ENCODE measurements at regions of chr11 and their contacts with region 1.

Region 1: GRCh38 chr11:26753723-26754504 is 32.1 kb upstream of the SLC5A12 start:
- DNase-seq: peak; percentile 49
- H3K4me3 ChIP-seq: no peak overlapping the region
- H3K27ac ChIP-seq: no peak overlapping the region
- H3K4me1 ChIP-seq: no peaks in the 10 kb centered on the region
- H3K27me3 ChIP-seq: no peaks in the 10 kb centered on the region
- CTCF ChIP-seq: peak; percentile 46 to 81 (median 74)
- POLR2A ChIP-seq: no peak

Region 2: DNA sequence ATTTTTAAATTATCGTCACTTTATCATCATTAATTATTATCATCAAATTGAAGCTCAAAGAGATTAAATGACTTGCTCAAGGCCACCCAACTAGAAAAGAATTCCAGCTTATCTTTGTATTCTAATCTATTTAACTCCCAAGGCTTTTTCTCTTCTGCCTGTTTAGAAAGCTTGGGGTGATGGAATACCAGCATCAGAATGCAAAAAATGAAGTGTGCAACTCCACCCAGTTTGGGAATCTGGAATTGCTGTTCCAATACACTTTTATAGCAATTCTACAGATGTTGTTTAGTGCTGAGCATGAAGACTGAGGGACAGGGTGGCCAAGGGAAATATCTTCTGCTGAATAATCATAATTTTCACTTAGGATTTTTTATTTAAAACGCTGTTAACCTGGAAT is 142.8 kb after region 1 on chr11:
- intact Hi-C with region 1: loop called (anchors 10 kb)
- DNase-seq: no peak
- H3K4me3 ChIP-seq: no peak overlapping the region
- H3K27ac ChIP-seq: no peak overlapping the region
- H3K4me1 ChIP-seq: no peaks in the 10 kb centered on the region
- H3K27me3 ChIP-seq: no peaks in the 10 kb centered on the region
- CTCF ChIP-seq: no peak
- POLR2A ChIP-seq: no peak

Region 3: GRCh38 chr11:26993965-26994457 is 240.1 kb after region 1 on chr11 and contains the start of gene FIBIN:
- intact Hi-C with region 1: loop called (anchors 10 kb)
- DNase-seq: no peak
- H3K4me3 ChIP-seq: peak within 1 kb of the TSS; percentile 31 to 33
- H3K27ac ChIP-seq: peak within 1 kb of the TSS; percentile 36 to 54
- H3K4me1 ChIP-seq: no peaks in the 10 kb centered on the region
- H3K27me3 ChIP-seq: no peaks in the 10 kb centered on the region
- CTCF ChIP-seq: no peak
- POLR2A ChIP-seq: no peak
- total RNA-seq, gene FIBIN: 5.7 to 13.4 TPM

Region 4: DNA sequence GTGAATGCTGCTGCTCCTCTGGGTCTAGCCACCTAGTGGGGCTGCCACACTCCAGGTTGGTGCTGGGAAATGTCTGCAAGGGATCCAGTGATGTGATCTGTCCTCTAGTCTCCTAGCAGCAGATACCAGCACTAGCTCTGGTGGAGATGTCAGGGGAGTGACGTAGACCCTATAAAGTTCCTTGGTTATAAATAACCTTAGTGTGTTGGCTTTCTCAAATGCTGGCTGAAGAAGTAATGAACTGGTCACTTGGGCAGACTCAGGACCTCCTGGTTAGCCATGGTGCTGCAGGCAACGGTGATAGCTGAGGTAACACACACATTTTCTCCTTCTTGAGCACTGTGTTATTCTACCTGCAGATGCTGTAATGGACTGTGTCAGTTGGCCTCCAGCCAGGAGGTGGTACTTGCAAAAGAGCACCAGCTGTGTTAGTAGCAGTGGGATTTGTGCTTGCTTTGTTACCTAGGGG is 322.2 kb after region 1 on chr11:
- intact Hi-C with region 1: loop called (anchors 10 kb)
- DNase-seq: no peak
- H3K4me3 ChIP-seq: no peak overlapping the region
- H3K27ac ChIP-seq: no peak overlapping the region
- H3K4me1 ChIP-seq: no peaks in the 10 kb centered on the region
- H3K27me3 ChIP-seq: no peaks in the 10 kb centered on the region
- CTCF ChIP-seq: no peak
- POLR2A ChIP-seq: no peak

Region 5: DNA sequence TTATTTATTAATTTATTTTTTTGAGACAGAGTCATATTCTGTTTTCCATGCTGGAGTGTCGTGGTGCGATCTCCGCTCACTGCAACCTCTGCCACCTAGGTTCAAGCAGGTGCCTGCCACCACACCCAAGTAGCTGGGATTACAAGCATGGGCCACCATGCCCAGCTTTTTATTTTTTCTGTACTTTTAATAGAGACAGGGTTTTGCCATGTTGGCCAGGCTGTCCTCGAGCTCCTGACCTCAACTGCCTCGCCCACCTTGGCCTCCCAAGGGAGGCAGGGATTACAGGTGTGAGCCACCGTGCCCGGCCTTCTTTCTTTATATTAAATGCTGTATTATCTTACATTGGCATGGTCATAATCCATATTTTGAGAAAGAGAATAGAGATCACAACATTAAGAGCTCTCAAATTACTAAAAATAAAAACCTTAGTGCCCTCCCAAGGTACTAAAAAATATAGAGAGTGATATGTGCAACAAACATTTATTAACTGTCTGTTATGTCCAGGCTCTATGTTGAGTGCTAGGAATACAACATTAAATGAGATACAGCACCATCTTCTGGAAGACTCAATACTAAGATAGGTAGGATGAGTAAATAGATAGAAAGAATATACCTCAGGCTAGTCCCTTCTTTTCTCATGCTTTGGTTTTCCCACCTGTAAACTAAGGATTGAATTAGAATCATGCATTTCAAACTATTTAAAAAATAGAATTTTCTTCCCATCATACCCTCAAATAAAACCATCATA is 370.8 kb after region 1 on chr11:
- intact Hi-C with region 1: loop called (anchors 10 kb)
- DNase-seq: no peak
- H3K4me3 ChIP-seq: no peak overlapping the region
- H3K27ac ChIP-seq: no peak overlapping the region
- H3K4me1 ChIP-seq: no peaks in the 10 kb centered on the region
- H3K27me3 ChIP-seq: no peaks in the 10 kb centered on the region
- CTCF ChIP-seq: peak in 3 of 4 experiments; percentile 26 to 52 (median 39)
- POLR2A ChIP-seq: no peak

Region 6: GRCh38 chr11:27158722-27159679 is 405.1 kb after region 1 on chr11:
- intact Hi-C with region 1: loop called (anchors 2 kb)
- DNase-seq: peak; percentile 61
- H3K4me3 ChIP-seq: no peak overlapping the region
- H3K27ac ChIP-seq: peak overlapping the region in 1 of 2 donors; percentile 29
- H3K4me1 ChIP-seq: no peaks in the 10 kb centered on the region
- H3K27me3 ChIP-seq: no peaks in the 10 kb centered on the region
- CTCF ChIP-seq: peak; percentile 69 to 90 (median 82)
- POLR2A ChIP-seq: no peak